Activated CD4-positive, alpha-beta memory T cell treated with anti-CD3 and anti-CD28 coated beads, Interleukin-2, amount 10 ng/mL, durations not matched to agents 7 days and 5 days (primary cell): ENCODE measurements at regions of chrX and their contacts with region 1.

Region 1: DNA sequence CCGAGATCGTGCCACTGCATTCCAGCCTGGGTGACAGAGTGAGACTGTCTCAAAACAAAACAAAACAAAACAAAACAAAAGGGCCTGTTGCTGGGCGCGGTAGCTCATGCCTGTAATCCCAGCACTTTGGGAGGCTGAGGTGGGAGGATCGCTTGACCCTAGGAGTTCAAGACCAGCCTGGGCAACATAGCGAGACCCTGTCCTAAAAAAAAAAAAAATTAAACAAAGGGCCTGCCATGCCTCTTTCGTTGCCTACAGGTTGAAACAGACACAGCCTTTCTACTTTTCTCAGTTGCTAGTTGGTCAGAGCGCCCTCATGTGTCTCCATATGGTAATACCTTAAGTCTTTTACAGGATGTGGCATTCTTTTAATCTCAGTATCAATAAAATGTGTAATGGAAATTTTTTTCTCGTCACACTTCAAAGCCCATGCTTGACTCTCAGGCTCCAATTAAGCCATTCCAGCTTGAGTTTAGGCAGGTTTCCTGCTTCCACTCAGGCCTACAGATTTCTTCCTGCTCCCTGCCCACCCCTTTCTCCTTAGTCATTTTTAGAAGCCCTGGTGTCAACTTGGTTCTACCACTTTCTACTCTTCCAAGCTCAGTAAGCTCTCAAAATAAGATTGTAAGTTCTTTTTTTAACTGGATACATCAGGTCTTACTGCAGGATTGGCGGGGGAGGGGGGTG is 4.7 kb upstream of the SOWAHD start:
- DNase-seq: peak; percentile 59
- H3K4me3 Mint-ChIP-seq: peak overlapping the region; percentile 8
- H3K27ac Mint-ChIP-seq: peak overlapping the region; percentile 100
- H3K4me1 Mint-ChIP-seq: peaks cover 44% of the 10 kb centered on the region
- H3K27me3 Mint-ChIP-seq: no peaks in the 10 kb centered on the region

Region 2: GRCh38 chrX:119685225-119686066 is 68.3 kb before region 1 on chrX:
- CTCF ChIA-PET with region 1: interaction called, 6 read pairs
- POLR2A ChIA-PET with region 1: interaction called, 75 read pairs
- DNase-seq: peak; percentile 64
- H3K4me3 Mint-ChIP-seq: peak overlapping the region; percentile 98
- H3K27ac Mint-ChIP-seq: peak overlapping the region; percentile 100
- H3K4me1 Mint-ChIP-seq: peaks cover 70% of the 10 kb centered on the region
- H3K27me3 Mint-ChIP-seq: no peaks in the 10 kb centered on the region

Region 3: DNA sequence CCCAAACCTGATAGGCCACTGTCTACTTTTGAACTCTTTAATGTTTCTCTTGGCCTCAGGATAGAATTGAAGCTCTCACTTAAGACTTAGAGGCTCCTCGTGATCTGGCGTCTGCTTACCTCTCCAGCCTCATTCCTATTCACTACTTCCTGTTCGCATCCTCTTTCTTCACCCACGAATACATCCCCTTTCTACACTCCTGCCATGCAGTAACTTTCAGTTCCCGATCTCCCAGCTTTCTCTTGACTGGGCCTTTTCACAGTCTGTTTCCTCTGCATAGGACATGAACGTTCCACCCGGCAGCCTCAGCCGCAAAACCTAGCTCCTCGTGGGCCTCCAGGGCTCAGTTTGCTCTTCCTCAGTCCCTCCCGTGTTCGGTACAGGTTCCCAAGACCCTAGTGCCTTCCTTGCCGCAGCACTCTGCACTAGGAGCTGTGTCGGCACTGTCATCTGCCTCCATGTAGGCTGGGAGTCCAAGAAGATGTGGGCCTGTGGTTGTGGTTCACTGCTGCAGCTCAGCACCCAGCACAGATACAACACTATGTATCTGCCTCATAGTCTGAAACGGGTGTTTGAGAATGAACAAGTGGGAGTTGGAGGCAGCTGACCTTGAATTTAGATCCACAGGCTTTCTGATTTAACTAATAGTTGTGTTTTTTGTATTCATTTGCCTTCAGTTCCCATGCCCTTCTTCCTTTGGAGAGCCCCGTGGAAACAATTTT is 22.0 kb after region 1 on chrX:
- CTCF ChIA-PET with region 1: interaction called, 11 read pairs
- POLR2A ChIA-PET with region 1: interaction called, 5 read pairs
- DNase-seq: no peak
- H3K4me3 Mint-ChIP-seq: no peak overlapping the region
- H3K27ac Mint-ChIP-seq: peak overlapping the region; percentile 61
- H3K4me1 Mint-ChIP-seq: peaks cover 9% of the 10 kb centered on the region
- H3K27me3 Mint-ChIP-seq: no peaks in the 10 kb centered on the region

Region 4: DNA sequence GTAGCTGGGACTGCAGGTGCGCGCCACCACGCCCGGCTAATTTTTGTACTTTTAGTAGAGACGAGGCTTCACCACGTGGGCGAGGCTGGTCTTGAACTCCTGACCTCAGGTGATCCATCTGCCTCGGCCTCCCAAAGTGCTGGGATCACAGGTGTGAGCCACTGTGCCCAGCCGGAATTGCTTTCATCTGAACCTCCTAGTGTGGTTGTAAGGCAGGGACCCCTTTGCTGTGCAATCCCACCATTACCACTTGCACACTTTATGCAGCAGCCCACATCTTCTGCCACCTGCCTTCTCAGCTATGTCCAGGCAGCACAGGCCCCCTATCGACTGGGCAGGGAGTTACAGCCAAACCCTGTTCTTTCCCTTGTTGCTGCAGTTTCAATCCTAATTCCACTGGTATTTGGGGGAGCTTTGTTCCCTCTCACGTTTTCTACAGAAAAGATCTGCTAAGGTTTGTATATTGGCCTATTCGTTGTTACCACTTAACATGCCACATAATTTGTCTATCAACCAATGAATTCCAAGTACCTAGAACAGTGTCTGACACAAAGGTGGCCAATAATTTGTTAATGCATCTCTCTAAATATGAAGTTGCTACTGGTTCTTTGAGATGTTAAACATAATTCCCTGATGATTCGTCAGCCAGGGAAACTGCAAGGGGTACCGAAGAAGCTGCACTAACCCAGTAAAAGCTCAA is 31.2 kb after region 1 on chrX:
- CTCF ChIA-PET with region 1: interaction called, 16 read pairs
- POLR2A ChIA-PET with region 1: interaction called, 62 read pairs
- DNase-seq: peak; percentile 56
- H3K4me3 Mint-ChIP-seq: no peak overlapping the region
- H3K27ac Mint-ChIP-seq: peak overlapping the region; percentile 45
- H3K4me1 Mint-ChIP-seq: peaks cover 46% of the 10 kb centered on the region
- H3K27me3 Mint-ChIP-seq: no peaks in the 10 kb centered on the region

Region 5: GRCh38 chrX:119791438-119792231 is 37.9 kb after region 1 on chrX and contains the start of gene RPL39:
- CTCF ChIA-PET with region 1: interaction called, 6 read pairs
- POLR2A ChIA-PET with region 1: interaction called, 62 read pairs
- DNase-seq: peak; percentile 85
- H3K4me3 Mint-ChIP-seq: peak within 1 kb of the TSS; percentile 93
- H3K27ac Mint-ChIP-seq: peak within 1 kb of the TSS; percentile 92
- H3K4me1 Mint-ChIP-seq: peaks cover 28% of the 10 kb centered on the region
- H3K27me3 Mint-ChIP-seq: no peaks in the 10 kb centered on the region
- total RNA-seq, gene RPL39: 2,056 to 2,070 TPM

Region 6: DNA sequence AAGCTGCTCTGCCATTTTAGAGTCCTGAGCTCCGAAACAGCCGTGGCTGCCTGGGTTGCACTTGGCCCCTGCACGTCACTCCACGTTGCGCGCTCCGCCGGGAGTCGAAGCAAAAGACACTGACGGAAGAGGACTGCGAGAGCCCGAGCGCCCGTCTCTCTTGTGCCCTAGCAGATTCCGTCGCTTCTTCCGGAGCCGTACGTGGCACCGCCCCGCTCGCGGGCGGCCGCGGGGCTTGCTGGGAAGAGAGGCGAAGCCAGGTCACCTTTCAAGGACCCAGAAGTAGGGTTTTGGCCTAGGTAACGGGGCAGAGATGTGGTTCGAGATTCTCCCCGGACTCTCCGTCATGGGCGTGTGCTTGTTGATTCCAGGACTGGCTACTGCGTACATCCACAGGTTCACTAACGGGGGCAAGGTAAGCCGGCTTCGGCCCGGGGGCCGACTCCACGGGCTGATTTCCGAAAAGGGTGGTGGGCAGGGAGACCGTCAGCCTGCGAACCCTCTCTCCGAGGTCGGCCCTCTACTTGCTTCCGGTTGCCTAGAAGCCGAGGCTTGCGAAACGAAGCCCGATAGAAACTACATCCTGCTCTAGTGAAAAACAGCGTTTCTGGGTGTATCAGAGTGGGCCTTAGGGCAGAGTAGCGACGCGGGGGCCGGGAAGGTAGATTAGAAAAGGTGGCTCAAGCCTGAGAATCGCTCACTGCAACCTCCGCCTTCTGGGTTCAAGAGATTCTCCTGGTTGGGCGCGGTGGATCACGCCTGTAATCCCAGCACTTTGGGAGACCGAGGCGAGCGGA is 118.1 kb after region 1 on chrX and contains the starts of genes NDUFA1 and RNF113A:
- CTCF ChIA-PET with region 1: interaction called, 3 read pairs
- POLR2A ChIA-PET with region 1: interaction called, 27 read pairs
- DNase-seq: peak; percentile 89
- H3K4me3 Mint-ChIP-seq: peak within 1 kb of the TSS; percentile 95
- H3K27ac Mint-ChIP-seq: peak within 1 kb of the TSS; percentile 99
- H3K4me1 Mint-ChIP-seq: peaks cover 21% of the 10 kb centered on the region
- H3K27me3 Mint-ChIP-seq: no peaks in the 10 kb centered on the region
- total RNA-seq, gene NDUFA1: 104 to 108 TPM
- total RNA-seq, gene RNF113A: 33.0 to 36.2 TPM